Activated naive CD4-positive, alpha-beta T cell treated with anti-CD3 and anti-CD28 coated beads for 36 hours (primary cell): ENCODE measurements at regions of chr9 and their contacts with region 1.

Region 1: DNA sequence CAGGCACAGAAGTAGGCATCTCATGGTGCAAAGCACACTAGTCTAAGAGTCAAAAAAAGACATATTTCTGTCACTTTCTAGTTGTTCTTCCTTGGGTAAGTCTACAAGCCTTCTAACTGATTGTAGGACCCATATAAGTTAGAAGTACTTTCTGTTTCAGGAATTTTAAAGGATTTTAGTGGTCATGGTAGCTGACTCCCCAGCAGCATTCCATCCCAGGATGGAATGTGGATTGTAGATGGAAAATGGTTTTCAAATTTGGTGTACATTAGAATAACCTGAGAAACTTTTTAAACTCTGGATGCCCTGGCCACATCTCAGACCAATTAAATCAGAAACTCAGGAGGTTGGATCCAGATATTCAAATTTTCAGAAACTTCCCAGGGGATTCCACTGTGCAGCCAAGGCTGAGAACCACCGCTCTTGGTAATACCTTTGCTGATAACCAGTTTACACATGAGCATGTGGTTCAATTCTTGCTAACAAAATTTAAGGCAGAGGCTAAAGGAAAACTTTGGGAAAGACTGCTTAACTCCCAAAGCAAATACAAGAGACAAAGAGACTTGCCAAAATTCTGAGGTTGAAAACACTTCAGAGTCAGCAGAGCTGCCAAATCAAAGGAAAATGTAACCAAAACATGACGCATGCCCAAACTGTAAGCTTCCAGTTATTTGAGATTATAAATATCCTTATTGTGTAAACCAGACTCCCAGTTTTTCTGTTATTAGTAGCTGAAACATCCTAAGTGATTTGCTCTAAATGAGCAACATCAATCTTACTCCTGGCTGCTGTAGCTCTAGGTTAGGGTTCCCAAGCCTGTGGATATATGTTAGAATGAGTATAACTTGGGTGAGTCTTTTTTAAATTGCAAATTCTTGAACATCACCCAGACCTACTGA is 145.4 kb upstream of the MTAP start:
- DNase-seq: no peak
- H3K4me3 Mint-ChIP-seq: no peak overlapping the region
- H3K27ac Mint-ChIP-seq: no peak overlapping the region
- H3K4me1 Mint-ChIP-seq: peaks cover 14% of the 10 kb centered on the region
- H3K27me3 Mint-ChIP-seq: no peaks in the 10 kb centered on the region

Region 2: DNA sequence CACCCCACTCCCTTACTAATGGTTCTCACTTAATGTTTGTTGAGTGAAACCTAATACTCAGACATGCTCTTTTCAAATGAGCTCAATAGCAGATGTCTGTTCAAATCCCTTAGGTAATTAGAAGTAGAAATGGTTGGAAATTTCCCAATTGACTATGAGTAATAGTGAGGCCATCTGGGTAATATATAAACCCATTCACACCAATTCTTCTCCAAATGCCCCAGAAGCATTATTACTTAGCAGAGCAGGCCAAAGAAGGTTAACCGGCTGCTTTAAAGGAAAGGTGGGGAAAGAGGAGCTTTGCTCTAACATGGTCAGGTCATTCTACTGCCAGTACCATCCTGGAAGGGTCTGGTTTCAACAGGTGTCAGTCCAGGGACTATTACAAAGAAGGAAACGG is 26.0 kb after region 1 on chr9:
- CTCF ChIA-PET with region 1: no interaction called
- intact Hi-C with region 1: loop called (anchors 1 kb)
- DNase-seq: no peak
- H3K4me3 Mint-ChIP-seq: no peak overlapping the region
- H3K27ac Mint-ChIP-seq: no peak overlapping the region
- H3K4me1 Mint-ChIP-seq: peaks cover 59% of the 10 kb centered on the region
- H3K27me3 Mint-ChIP-seq: no peaks in the 10 kb centered on the region